ENCODE measurements at regions of chr11 and their contacts with region 1.

Region 1: DNA sequence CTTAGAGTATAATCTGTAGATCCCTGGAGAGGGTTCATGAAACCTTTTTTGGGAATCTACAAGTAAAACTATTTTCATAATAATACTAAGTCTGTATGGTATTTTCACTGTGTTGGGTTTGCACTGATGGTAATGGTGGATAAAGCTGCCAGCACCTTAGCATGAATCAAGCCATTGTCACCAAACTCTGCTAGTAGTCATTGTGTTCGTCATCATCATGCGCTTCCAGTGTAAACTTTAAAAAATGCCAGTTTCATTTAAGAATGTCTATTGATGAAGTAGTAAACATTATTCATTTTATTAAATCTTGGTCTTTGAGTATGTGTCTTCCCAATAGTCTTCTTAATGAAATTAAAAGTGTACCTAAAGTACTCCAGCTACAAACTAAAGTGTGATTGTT is 15.0 kb downstream of the ALKBH3 start:
- DNase-seq: no peak
- H3K4me3 Mint-ChIP-seq: no peak overlapping the region
- H3K27ac Mint-ChIP-seq: no peak overlapping the region
- H3K4me1 Mint-ChIP-seq: no peaks in the 10 kb centered on the region
- H3K27me3 Mint-ChIP-seq: no peaks in the 10 kb centered on the region

Region 2: DNA sequence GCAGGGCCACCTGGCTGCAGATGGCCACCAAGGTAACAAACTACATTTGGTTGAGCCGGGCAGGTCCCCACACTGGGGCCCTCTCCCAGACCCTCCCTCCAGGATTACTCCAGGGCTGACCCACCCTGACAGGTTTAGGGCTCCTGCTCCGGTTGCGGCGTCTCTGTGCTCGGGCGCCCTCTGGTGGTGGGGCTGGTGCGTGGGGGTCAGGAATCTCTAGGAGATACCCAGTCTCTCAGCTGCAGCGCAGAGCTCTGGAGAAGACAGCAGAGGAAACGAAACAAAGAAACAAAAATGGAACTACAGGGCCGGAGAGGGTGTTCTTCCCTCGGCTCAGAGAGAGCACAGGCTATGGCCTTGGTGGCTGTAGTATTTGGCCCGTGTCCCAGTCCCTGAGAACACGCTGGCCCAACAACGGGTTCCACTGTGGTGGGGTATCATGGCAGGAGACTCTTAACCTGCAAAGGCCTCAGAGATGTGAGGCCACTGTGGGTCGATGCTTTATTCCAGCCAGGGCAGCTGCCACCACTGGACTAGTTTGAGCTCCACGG is 49.2 kb after region 1 on chr11:
- CTCF ChIA-PET with region 1: interaction called, 25 read pairs
- DNase-seq: peak; percentile 82
- H3K4me3 Mint-ChIP-seq: peak overlapping the region; percentile 62
- H3K27ac Mint-ChIP-seq: no peak overlapping the region
- H3K4me1 Mint-ChIP-seq: peaks cover 19% of the 10 kb centered on the region
- H3K27me3 Mint-ChIP-seq: peaks cover 90% of the 10 kb centered on the region

Measured in activated naive CD4-positive, alpha-beta T cell treated with anti-CD3 and anti-CD28 coated beads, Interleukin-2, amount 10 ng/mL, durations not matched to agents 7 days and 5 days (primary cell).